Natural killer cell (primary cell): ENCODE measurements at regions of chr19 and their contacts with region 1.

Region 1: DNA sequence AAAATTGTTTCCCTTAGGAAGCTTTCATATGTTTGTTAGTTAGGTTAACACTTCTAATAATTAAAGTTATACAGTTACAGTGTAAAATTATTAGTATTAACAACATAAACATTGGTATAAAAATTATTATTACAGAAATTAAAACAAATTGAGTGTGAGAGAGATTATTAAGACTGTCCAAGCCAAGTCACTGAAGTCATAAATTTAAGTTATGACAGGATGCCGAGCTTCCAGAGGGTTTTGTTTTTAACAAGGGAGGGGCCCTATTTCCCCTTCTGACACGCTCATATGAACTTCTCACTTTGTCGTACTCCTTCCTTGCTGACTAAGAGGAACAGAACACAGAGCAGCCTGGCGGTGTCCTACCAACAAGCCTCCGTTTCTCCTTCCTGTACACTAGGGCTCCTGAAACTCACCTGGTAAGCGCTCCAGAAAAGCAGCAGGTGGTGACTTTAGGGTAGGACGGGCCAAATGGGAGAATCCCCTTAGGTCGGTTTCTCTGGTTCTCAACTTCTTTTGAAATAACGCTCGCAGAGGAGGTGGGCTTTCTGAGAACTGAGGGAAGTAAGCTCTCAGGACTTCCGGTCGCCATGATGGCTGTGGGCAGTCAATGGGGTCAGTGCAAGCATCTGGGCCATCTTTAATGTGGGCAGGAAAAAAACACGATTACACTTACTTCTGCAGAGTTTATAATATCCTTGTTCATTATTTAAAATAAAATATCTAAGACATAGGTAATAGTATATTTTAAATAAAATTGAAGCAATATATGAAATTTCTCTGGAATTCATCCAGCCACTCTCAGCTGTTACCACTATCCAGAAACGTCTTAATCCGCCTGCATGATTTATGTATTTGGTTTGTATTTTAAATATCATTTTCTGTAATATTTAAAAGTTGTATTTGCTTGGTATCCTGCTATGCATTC is at the start of gene CARD8:
- DNase-seq: peak; percentile 78 to 92
- ATAC-seq: peak; percentile 82 to 89 (median 84)
- H3K4me3 ChIP-seq: peak within 1 kb of the TSS; percentile 75
- H3K4me3 Mint-ChIP-seq: peak within 1 kb of the TSS; percentile 99
- H3K27ac ChIP-seq: peak within 1 kb of the TSS; percentile 94
- H3K27ac Mint-ChIP-seq: peak within 1 kb of the TSS; percentile 92 to 99
- H3K4me1 ChIP-seq: peaks cover 52% of the 10 kb centered on the region
- H3K4me1 Mint-ChIP-seq: peaks cover 63 to 76% of the 10 kb centered on the region in 2 donors
- H3K27me3 ChIP-seq: no peaks in the 10 kb centered on the region
- H3K27me3 Mint-ChIP-seq: no peaks in the 10 kb centered on the region
- CTCF ChIP-seq: no peak
- total RNA-seq, gene CARD8: 147 to 216 (median 154) TPM

Region 2: GRCh38 chr19:48020686-48021085 is 235.0 kb before region 1 on chr19:
- intact Hi-C with region 1: no loop called
- DNase-seq: no peak
- ATAC-seq: no peak
- H3K4me3 ChIP-seq: no peak overlapping the region
- H3K4me3 Mint-ChIP-seq: no peak overlapping the region
- H3K27ac ChIP-seq: no peak overlapping the region
- H3K27ac Mint-ChIP-seq: no peak overlapping the region
- H3K4me1 ChIP-seq: no peaks in the 10 kb centered on the region
- H3K4me1 Mint-ChIP-seq: no peaks in the 10 kb centered on the region
- H3K27me3 ChIP-seq: no peaks in the 10 kb centered on the region
- H3K27me3 Mint-ChIP-seq: peaks cover 16 to 21% of the 10 kb centered on the region in 2 donors
- CTCF ChIP-seq: no peak

Region 3: GRCh38 chr19:48170038-48170812 is 85.4 kb before region 1 on chr19 and contains the starts of genes LIG1 and ZSWIM9:
- intact Hi-C with region 1: loop called (anchors 2 kb)
- DNase-seq: peak; percentile 91 to 95
- ATAC-seq: peak; percentile 83 to 94 (median 86)
- H3K4me3 ChIP-seq: peak within 1 kb of the TSS; percentile 98
- H3K4me3 Mint-ChIP-seq: peak within 1 kb of the TSS; percentile 92
- H3K27ac ChIP-seq: peak within 1 kb of the TSS; percentile 93
- H3K27ac Mint-ChIP-seq: peak within 1 kb of the TSS; percentile 91 to 98
- H3K4me1 ChIP-seq: peaks cover 15% of the 10 kb centered on the region
- H3K4me1 Mint-ChIP-seq: peaks cover 25 to 43% of the 10 kb centered on the region in 2 donors
- H3K27me3 ChIP-seq: no peaks in the 10 kb centered on the region
- H3K27me3 Mint-ChIP-seq: no peaks in the 10 kb centered on the region
- CTCF ChIP-seq: peak; percentile 13
- total RNA-seq, gene LIG1: 45.4 to 65.2 (median 57.2) TPM
- total RNA-seq, gene ZSWIM9: 4.0 to 7.0 (median 5.4) TPM

Region 4: DNA sequence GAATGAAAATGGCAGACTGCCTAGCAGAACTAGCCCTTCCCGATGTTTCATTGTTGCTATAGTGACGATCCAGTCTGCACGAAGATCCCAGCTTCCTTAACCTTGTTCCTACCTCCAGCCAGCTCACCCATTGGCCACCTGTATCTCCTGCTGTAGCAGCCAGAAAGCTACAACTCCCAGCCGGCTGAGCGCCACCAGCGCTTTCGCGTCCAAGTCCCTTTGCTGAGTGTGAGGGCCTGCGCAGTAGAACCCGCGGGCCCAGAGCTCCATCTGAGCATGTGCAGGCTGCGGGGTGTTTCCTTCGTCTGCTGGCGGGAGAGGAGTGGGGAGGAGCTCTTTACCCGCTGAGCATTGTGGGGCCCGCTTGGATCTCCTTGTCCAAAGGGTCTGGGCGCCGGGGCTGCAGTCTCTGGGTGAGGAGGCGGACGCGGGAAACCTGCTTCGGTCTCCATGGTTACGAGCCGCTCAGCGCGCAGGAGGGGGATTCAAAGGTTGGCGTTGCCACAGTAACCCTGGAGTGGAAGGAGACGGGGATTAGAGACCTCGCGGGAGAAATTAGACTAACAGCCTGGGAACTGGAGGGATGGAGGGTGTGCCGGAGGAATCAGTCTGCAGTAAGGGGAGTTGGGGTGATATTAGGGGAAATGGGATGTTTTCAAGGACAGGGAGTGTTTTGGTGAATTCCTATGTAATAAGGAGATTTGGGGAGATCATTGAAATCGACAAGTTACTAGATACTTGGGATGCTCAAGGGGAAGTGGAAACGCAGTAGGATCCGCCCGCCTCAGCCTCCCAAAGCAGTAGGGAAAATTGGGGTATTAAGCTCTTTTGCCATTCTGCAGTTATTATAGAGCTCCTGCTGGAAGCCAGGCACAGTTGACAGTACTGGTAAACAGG is 51.7 kb before region 1 on chr19:
- intact Hi-C with region 1: loop called (anchors 1 kb)
- DNase-seq: peak; percentile 82 to 94
- ATAC-seq: peak; percentile 100
- H3K4me3 ChIP-seq: peak overlapping the region; percentile 66
- H3K4me3 Mint-ChIP-seq: no peak overlapping the region
- H3K27ac ChIP-seq: peak overlapping the region; percentile 43
- H3K27ac Mint-ChIP-seq: no peak overlapping the region
- H3K4me1 ChIP-seq: peaks cover 13% of the 10 kb centered on the region
- H3K4me1 Mint-ChIP-seq: peaks cover 8 to 9% of the 10 kb centered on the region in 2 donors
- H3K27me3 ChIP-seq: no peaks in the 10 kb centered on the region
- H3K27me3 Mint-ChIP-seq: no peaks in the 10 kb centered on the region
- CTCF ChIP-seq: no peak

Region 5: GRCh38 chr19:48480558-48481500 is 225.2 kb after region 1 on chr19:
- intact Hi-C with region 1: no loop called
- DNase-seq: peak; percentile 52 to 76
- ATAC-seq: peak; percentile 84 to 89 (median 86)
- H3K4me3 ChIP-seq: peak overlapping the region; percentile 39
- H3K4me3 Mint-ChIP-seq: peak overlapping the region; percentile 87
- H3K27ac ChIP-seq: peak overlapping the region; percentile 49
- H3K27ac Mint-ChIP-seq: peak overlapping the region; percentile 67 to 91
- H3K4me1 ChIP-seq: peaks cover 18% of the 10 kb centered on the region
- H3K4me1 Mint-ChIP-seq: peaks cover 9 to 16% of the 10 kb centered on the region in 2 donors
- H3K27me3 ChIP-seq: no peaks in the 10 kb centered on the region
- H3K27me3 Mint-ChIP-seq: peaks cover 0 to 4% of the 10 kb centered on the region in 2 donors
- CTCF ChIP-seq: no peak